ENCODE measurements at regions of chr9 and their contacts with region 1.

Region 1: DNA sequence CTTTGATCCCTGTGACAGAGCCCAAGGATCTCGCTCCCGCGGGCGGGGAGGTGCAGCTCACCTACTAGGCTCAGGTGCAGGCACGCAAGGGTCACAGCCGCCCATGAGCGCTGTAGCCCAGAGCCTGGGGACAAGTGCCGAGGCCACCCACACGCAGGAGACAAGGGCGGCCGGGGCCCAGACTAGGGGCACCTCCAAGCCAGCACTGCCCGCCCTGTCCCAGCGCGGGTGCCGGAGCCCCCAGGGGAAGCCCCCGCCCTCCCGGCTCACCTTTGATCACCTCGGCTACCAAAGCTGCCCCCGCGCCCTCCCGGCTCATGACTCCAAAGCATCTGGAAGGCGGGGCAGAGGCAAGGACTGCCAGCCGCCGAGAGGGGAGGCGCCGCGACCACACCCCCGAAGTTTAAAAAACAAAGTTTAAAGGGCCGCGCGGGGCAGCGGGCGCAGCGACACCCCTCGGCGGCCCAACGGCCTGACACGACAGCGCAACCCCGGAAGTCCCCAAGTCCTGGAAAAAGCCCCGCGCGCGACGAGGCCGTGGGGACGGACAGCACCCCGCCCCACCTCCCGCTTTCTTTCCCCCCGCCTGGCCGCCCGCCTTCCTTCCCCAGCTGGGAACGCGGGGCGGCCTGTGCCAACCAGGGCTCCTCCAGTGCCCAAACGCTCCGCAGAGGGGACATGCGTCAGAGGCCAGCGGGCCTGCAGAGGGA is 53.0 kb downstream of the CDC14B start:
- DNase-seq: peak; percentile 93
- H3K4me3 ChIP-seq: peak overlapping the region; percentile 74 to 91 (median 90)
- H3K27ac ChIP-seq: peak overlapping the region; percentile 87 to 94 (median 89)
- H3K4me1 ChIP-seq: peaks cover 6 to 25% (median 24%) of the 10 kb centered on the region in 4 donors
- H3K27me3 ChIP-seq: no peaks in the 10 kb centered on the region
- CTCF ChIP-seq: peak; percentile 64 to 67 (median 66)
- EP300 ChIP-seq: no peak
- POLR2A ChIP-seq: no peak

Region 2: DNA sequence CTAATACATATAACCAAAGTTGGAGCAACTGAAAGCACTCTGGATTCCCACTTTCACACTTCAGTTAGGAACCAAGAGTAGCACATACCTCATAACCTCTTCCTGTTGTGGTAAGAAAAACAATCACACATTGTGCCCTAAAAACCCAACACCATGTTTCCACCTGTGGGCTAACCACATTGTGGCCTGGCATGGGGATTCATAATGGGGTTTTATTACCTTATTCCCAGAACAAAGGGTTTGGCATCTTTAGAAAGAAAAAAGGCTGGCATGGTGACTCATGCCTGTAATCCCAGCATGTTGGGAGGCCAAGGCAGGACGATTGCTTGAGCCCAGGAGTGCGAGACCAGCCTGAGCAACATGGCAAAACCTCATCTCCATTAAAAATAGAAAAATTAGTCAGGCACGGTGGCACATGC is 325.3 kb before region 1 on chr9:
- intact Hi-C with region 1: no loop called
- DNase-seq: no peak
- H3K4me3 ChIP-seq: no peak overlapping the region
- H3K27ac ChIP-seq: no peak overlapping the region
- H3K4me1 ChIP-seq: no peaks in the 10 kb centered on the region
- H3K27me3 ChIP-seq: peaks cover 0 to 4% (median 0%) of the 10 kb centered on the region in 4 donors
- CTCF ChIP-seq: no peak
- EP300 ChIP-seq: no peak
- POLR2A ChIP-seq: no peak

Region 3: DNA sequence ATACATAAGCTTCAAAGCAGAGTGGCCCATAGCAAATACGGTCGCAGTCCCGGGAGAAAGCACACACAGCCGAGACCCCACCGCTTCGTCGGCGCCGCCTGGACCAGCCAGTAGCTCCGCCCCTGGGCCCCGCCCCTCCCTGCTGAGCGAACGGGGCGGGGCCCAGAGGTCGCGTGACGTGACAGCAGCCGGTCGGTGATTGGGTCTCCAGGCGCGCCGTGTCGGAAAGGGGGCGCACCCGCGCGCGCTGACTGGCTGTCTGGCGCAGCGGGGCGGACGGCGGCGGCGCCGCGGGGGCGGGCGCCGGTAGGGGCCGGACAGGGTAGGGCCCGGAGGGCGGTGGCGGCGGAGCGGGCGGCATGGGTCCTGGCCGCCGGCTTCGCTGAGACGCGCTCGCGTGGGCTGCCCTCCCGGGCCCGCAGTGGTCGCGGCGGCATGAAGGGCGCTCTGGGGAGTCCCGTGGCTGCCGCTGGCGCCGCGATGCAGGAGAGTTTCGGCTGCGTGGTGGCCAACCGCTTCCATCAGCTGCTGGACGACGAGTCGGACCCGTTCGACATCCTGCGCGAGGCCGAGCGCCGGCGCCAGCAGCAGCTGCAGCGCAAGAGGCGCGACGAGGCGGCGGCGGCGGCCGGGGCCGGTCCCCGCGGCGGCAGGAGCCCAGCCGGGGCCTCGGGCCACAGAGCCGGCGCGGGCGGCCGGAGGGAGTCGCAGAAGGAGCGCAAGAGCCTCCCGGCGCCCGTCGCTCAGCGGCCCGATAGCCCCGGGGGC is 116.6 kb before region 1 on chr9 and contains the start of gene HABP4:
- intact Hi-C with region 1: loop called (anchors 5 kb)
- DNase-seq: peak; percentile 98
- H3K4me3 ChIP-seq: peak within 1 kb of the TSS; percentile 76 to 92 (median 83)
- H3K27ac ChIP-seq: peak within 1 kb of the TSS; percentile 88 to 97 (median 94)
- H3K4me1 ChIP-seq: peaks cover 7 to 42% (median 36%) of the 10 kb centered on the region in 4 donors
- H3K27me3 ChIP-seq: no peaks in the 10 kb centered on the region
- CTCF ChIP-seq: no peak
- EP300 ChIP-seq: no peak
- POLR2A ChIP-seq: peak; percentile 49
- total RNA-seq, gene HABP4: 38.4 to 97.2 (median 54.2) TPM

Region 4: GRCh38 chr9:96514108-96514799 is 52.4 kb before region 1 on chr9:
- intact Hi-C with region 1: no loop called
- DNase-seq: no peak
- H3K4me3 ChIP-seq: peak overlapping the region in 1 of 4 donors; percentile 8
- H3K27ac ChIP-seq: peak overlapping the region; percentile 25 to 68 (median 58)
- H3K4me1 ChIP-seq: peaks cover 6 to 24% (median 16%) of the 10 kb centered on the region in 4 donors
- H3K27me3 ChIP-seq: no peaks in the 10 kb centered on the region
- CTCF ChIP-seq: no peak
- EP300 ChIP-seq: no peak
- POLR2A ChIP-seq: no peak

Region 5: DNA sequence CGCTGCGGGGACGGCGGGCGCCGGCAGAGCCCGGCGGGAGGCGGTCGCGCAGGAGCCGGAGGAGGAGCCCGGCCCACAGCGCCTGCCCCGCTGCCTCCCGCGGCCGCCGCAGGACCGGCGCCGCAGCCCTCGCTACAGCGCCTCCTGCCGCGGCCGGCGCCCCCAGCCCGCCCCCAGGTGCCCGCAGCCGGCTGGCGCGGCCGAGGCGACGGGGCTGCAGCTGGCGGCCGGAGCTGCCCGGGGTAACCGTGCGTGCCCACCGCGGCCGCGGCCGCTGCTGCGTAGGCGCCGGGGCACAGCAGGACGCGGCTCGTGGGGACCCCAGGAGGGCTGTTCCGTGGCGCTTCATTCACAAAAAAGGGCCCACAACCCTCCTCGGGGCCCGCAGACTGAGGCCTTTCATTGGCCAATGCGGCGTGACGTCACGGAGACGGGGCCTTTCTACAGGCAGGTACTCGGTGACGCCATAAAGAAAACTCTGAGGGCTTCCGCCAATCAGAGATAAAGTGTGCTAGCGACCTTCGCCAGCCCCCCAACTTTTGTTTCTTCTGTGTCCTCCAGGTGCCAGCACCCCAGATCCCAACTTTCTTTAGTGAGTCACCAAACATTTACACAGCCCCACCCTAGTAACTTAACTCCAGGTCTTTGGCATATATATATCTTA is 53.0 kb after region 1 on chr9 and contains the start of gene CDC14B:
- intact Hi-C with region 1: loop called (anchors 5 kb)
- DNase-seq: peak; percentile 94
- H3K4me3 ChIP-seq: peak within 1 kb of the TSS; percentile 89 to 93 (median 92)
- H3K27ac ChIP-seq: peak within 1 kb of the TSS; percentile 85 to 92 (median 88)
- H3K4me1 ChIP-seq: peaks cover 0 to 22% (median 19%) of the 10 kb centered on the region in 4 donors
- H3K27me3 ChIP-seq: no peaks in the 10 kb centered on the region
- CTCF ChIP-seq: peak in 2 of 3 experiments; percentile 29 to 43
- EP300 ChIP-seq: no peak
- POLR2A ChIP-seq: no peak
- total RNA-seq, gene CDC14B: 22.0 to 39.7 (median 27.0) TPM

Measured in esophagus muscularis mucosa (tissue), 4 donors.